Activated CD8-positive, alpha-beta memory T cell treated with anti-CD3 and anti-CD28 coated beads, Interleukin-2, amount 10 ng/mL, durations not matched to agents 7 days and 5 days (primary cell): ENCODE measurements at regions of chr2 and their contacts with region 1.

Region 1: DNA sequence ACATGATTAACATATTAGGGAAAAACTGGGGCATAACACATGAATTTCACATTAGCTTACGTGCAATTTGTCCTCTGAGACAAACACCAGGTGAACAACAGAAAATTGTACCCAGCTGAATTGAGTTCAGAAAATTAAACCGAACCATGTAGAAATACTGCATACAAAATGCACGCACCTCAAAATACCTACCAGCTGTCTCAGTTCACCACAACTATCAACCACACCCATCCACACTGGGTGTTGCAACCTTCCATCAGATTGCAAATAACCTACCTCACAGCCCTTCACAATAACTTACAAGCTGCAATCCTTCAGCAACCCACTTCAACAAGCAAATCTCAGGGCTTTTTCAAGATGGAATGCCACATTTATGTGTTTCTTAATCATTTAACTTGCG is 55.9 kb downstream of the UNC50 start:
- DNase-seq: peak; percentile 85
- ATAC-seq: peak; percentile 63
- H3K4me3 Mint-ChIP-seq: peak overlapping the region; percentile 50
- H3K27ac Mint-ChIP-seq: peak overlapping the region; percentile 99
- H3K4me1 Mint-ChIP-seq: peaks cover 63% of the 10 kb centered on the region
- H3K27me3 Mint-ChIP-seq: no peaks in the 10 kb centered on the region

Region 2: DNA sequence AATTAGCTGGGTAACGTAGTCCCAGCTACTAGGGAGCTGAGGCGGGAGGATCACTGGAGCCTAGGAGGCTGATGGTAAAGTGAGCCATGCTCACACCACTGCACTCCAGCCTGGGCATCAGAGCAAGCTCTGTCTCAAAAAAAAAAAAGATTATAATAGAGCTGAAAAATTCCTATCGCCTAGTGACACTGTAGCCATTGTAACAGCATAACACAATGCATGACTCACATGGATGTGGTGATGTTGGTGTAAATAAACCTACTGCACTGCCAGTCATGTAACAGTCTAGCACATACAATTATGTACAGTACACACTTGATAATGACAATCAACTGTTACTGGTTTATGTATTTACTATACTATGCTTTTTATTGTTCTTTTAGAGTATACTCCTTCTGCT is 27.0 kb after region 1 on chr2:
- CTCF ChIA-PET with region 1: interaction called, 11 read pairs
- DNase-seq: no peak
- ATAC-seq: peak; percentile 41
- H3K4me3 Mint-ChIP-seq: no peak overlapping the region
- H3K27ac Mint-ChIP-seq: no peak overlapping the region
- H3K4me1 Mint-ChIP-seq: peaks cover 66% of the 10 kb centered on the region
- H3K27me3 Mint-ChIP-seq: no peaks in the 10 kb centered on the region